ENCODE measurements at regions of chr22 and their contacts with region 1.

Region 1: DNA sequence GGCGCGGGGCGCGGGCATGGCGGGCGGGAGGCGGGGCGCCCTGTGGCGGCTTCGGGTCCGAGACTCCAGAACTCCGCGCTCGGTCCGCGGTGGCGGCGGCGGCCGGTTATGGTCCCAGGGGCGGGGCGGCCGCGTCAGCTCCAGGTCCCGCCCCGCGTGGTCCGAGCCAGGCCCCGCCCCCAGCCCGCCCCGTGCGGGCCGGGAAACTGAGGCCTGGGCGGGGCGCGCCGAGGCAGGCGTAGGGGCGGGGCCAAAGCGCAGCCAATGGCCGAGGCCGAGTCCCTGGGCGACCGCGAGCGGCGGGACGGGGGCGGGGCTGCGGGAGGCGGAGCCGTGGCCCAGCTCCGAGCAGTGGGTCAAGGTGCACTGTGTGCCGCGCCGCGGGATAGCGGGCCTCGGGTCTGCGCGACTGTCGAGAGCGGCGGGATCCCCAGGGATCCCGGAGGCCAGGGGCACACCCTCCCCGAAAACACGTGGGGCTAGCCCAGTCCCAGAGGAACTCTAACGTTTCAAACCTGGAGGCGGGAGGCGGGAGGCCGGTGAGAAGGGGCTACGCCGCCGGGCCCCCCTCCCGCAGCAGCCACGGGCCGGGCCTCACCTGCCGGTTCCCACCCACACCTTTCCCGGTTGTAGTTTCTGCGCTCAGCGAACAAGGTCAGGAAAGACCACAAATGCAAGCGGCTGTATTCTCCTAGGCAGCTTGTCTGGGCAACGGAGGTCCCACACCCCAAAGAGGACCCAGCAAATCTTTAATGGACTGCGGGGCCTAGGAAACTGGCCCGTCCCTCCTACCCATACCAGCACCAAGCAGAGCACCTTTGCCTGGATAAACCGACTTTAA is at the start of gene SLC25A1:
- DNase-seq: peak; percentile 88
- H3K4me3 ChIP-seq: peak within 1 kb of the TSS; percentile 64 to 77 (median 76)
- H3K27ac ChIP-seq: peak within 1 kb of the TSS; percentile 56
- H3K4me1 ChIP-seq: peaks cover 38% of the 10 kb centered on the region
- H3K27me3 ChIP-seq: no peaks in the 10 kb centered on the region
- CTCF ChIP-seq: no peak
- total RNA-seq, gene SLC25A1: 70.5 to 130 TPM

Region 2: GRCh38 chr22:18954990-18955571 is 223.8 kb before region 1 on chr22:
- CTCF ChIA-PET with region 1: no interaction called
- dilution Hi-C with region 1: no loop called
- in situ Hi-C with region 1: no loop called
- intact Hi-C with region 1: loop called (anchors 5 kb)
- DNase-seq: no peak
- H3K4me3 ChIP-seq: no peak overlapping the region
- H3K27ac ChIP-seq: no peak overlapping the region
- H3K4me1 ChIP-seq: no peaks in the 10 kb centered on the region
- H3K27me3 ChIP-seq: no peaks in the 10 kb centered on the region
- CTCF ChIP-seq: no peak

Region 3: GRCh38 chr22:19109198-19110067 is 69.4 kb before region 1 on chr22:
- CTCF ChIA-PET with region 1: no interaction called
- dilution Hi-C with region 1: no loop called
- in situ Hi-C with region 1: no loop called
- intact Hi-C with region 1: loop called (anchors 1 kb)
- DNase-seq: peak; percentile 88
- H3K4me3 ChIP-seq: peak overlapping the region in 1 of 3 experiments; percentile 4
- H3K27ac ChIP-seq: peak overlapping the region; percentile 88
- H3K4me1 ChIP-seq: peaks cover 20% of the 10 kb centered on the region
- H3K27me3 ChIP-seq: no peaks in the 10 kb centered on the region
- CTCF ChIP-seq: no peak

Region 4: DNA sequence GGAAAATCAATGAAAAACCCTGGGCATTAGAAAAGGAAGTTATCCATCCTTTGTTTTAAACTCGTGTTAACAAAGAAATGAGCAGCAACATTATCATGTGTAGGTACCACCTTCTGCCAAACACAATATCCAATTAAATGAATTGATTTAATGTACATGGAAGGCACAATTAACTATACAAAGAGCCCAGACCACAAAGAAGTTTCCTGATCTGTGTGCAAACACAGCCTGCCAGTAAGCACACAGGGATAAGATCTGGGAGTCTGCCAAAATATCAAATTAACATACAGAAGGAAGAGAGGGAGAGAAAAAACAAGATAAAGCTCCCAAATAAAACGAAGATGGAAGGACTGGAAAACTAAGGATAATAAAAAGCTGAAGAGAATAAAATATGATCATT is 53.7 kb after region 1 on chr22:
- CTCF ChIA-PET with region 1: no interaction called
- dilution Hi-C with region 1: no loop called
- in situ Hi-C with region 1: no loop called
- intact Hi-C with region 1: no loop called
- DNase-seq: no peak
- H3K4me3 ChIP-seq: no peak overlapping the region
- H3K27ac ChIP-seq: no peak overlapping the region
- H3K4me1 ChIP-seq: no peaks in the 10 kb centered on the region
- H3K27me3 ChIP-seq: no peaks in the 10 kb centered on the region
- CTCF ChIP-seq: no peak

Region 5: GRCh38 chr22:19291580-19292457 is 112.9 kb after region 1 on chr22 and contains the start of gene CLTCL1:
- CTCF ChIA-PET with region 1: no interaction called
- dilution Hi-C with region 1: no loop called
- in situ Hi-C with region 1: no loop called
- intact Hi-C with region 1: loop called (anchors 1 kb)
- DNase-seq: peak; percentile 71
- H3K4me3 ChIP-seq: peak within 1 kb of the TSS; percentile 74 to 81 (median 80)
- H3K27ac ChIP-seq: peak within 1 kb of the TSS; percentile 46
- H3K4me1 ChIP-seq: peaks cover 47% of the 10 kb centered on the region
- H3K27me3 ChIP-seq: no peaks in the 10 kb centered on the region
- CTCF ChIP-seq: no peak
- total RNA-seq, gene CLTCL1: 30.0 to 33.2 TPM

Region 6: GRCh38 chr22:19432133-19432851 is 253.4 kb after region 1 on chr22 and contains the start of gene MRPL40:
- CTCF ChIA-PET with region 1: interaction called, 3 read pairs
- dilution Hi-C with region 1: no loop called
- in situ Hi-C with region 1: no loop called
- intact Hi-C with region 1: loop called (anchors 2 kb)
- DNase-seq: peak; percentile 92
- H3K4me3 ChIP-seq: peak within 1 kb of the TSS; percentile 70 to 95 (median 93)
- H3K27ac ChIP-seq: peak within 1 kb of the TSS; percentile 63
- H3K4me1 ChIP-seq: peaks cover 17% of the 10 kb centered on the region
- H3K27me3 ChIP-seq: no peaks in the 10 kb centered on the region
- CTCF ChIP-seq: no peak
- total RNA-seq, gene MRPL40: 22.8 to 40.0 TPM

Region 7: GRCh38 chr22:19455585-19456370 is 276.9 kb after region 1 on chr22:
- CTCF ChIA-PET with region 1: interaction called, 14 read pairs
- dilution Hi-C with region 1: no loop called
- in situ Hi-C with region 1: no loop called
- intact Hi-C with region 1: no loop called
- DNase-seq: no peak
- H3K4me3 ChIP-seq: no peak overlapping the region
- H3K27ac ChIP-seq: no peak overlapping the region
- H3K4me1 ChIP-seq: peaks cover 6% of the 10 kb centered on the region
- H3K27me3 ChIP-seq: no peaks in the 10 kb centered on the region
- CTCF ChIP-seq: no peak

Region 8: GRCh38 chr22:19479357-19480172 is 300.7 kb after region 1 on chr22 and contains the start of gene CDC45:
- CTCF ChIA-PET with region 1: no interaction called
- dilution Hi-C with region 1: no loop called
- in situ Hi-C with region 1: no loop called
- intact Hi-C with region 1: loop called (anchors 2 kb)
- DNase-seq: peak; percentile 98
- H3K4me3 ChIP-seq: peak within 1 kb of the TSS; percentile 40 to 93 (median 91)
- H3K27ac ChIP-seq: peak within 1 kb of the TSS; percentile 100
- H3K4me1 ChIP-seq: peaks cover 30% of the 10 kb centered on the region
- H3K27me3 ChIP-seq: no peaks in the 10 kb centered on the region
- CTCF ChIP-seq: no peak
- total RNA-seq, gene CDC45: 2.2 to 31.1 TPM